GM18951 (cell line): ENCODE measurements at regions of chr6 and their contacts with region 1.

Region 1: DNA sequence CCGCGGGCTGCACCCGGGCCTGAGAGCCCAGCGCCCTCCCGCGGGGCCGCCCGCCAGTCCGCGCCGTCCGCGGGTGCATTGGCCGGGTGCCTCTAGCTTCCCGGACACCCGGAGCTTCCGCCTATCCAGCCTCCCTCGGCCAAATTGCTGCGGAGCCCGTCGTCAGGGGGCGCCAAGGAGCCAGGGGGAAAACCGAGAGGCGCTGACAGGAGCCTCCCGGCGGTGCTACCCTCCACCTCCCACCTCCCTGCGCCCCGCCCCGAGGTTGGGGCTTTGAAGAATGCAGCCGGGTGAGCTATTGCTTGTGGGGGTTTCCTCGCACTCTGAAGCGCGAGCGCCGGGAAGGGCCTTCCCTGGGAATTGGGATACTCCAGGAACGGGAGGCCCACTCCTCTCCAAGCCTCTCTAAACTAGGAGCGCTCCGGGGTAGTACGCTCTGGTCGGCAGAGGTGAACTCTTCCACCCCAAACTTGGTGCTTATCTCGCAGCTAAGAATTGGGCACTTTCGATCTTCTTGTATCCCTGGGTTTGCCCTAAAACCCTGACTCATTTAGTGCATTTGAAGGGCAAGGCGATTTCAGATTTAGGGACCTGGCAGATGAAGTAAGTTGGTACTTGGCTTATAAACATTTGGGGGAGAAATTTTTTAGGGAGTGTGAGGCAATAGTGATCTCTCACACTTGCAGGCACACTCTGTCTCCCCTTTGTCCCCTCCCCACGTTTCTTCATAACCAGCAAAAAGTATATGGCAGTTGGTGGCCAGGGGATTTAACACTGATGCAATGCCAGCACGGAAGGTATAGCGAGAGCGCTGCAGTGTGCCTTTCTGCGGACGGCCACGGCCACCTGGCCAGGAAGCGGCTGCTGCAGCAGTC is 501 bp downstream of the BEND6 start:
- POLR2A ChIP-seq: peak; percentile 53

Region 2: GRCh38 chr6:56902641-56903464 is 52.6 kb before region 1 on chr6:
- in situ Hi-C with region 1: loop called (anchors 10 kb)
- POLR2A ChIP-seq: no peak